Activated CD4-positive, alpha-beta T cell treated with anti-CD3 and anti-CD28 coated beads for 36 hours (primary cell): ENCODE measurements at regions of chr9 and their contacts with region 1.

Region 1: DNA sequence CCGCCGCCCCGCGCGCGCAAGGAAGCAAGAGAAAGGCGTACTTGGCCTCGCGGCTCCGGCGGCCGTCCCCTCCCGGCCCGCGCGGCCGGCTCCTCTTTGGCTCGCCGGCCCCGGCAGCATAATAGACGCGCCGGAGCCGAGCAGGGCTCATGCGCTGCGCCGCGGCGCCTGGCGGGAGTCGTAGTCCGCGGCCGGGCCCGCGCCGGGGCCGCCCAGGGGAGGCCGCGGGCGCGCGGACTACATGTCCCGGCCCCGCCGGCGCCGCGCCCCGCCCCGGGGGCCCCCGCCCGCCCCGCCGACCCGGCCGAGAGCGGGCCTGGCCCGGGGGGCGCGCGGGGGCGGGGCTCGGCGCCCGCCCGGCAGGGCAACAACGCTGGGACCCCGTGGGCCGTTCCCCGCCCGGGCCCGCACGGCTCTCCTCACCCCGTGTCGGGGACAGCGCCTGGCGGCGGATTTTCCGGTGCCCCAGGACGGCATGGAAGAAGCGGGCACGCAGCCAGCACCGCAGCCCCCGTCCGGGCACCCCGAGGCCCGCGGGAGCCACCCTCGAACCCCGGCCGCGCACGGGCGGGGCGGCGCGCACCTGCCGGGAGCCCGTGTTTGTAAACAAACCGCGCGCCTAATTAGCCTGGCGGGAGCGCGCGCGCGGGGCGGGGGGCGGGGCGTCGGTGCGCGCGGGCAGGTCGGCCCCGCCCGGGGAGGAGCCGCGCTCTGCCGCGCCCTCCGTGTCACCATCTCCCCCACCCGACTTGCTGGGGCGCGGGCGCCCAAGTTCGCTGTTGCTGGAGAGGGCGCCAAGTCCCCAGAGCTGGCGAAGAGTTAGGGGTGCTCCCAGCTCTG is at the start of gene BRD3:
- DNase-seq: peak; percentile 91
- ATAC-seq: peak; percentile 85
- H3K4me3 Mint-ChIP-seq: peak within 1 kb of the TSS; percentile 85
- H3K27ac Mint-ChIP-seq: peak within 1 kb of the TSS; percentile 84
- H3K4me1 Mint-ChIP-seq: peaks cover 28% of the 10 kb centered on the region
- H3K27me3 Mint-ChIP-seq: peaks cover 14% of the 10 kb centered on the region
- total RNA-seq, gene BRD3: 33.8 to 39.2 TPM

Region 2: GRCh38 chr9:132474253-132474652 is 1593.9 kb before region 1 on chr9:
- CTCF ChIA-PET with region 1: no interaction called
- POLR2A ChIA-PET with region 1: no interaction called
- intact Hi-C with region 1: no loop called
- DNase-seq: no peak
- ATAC-seq: no peak
- H3K4me3 Mint-ChIP-seq: no peak overlapping the region
- H3K27ac Mint-ChIP-seq: no peak overlapping the region
- H3K4me1 Mint-ChIP-seq: no peaks in the 10 kb centered on the region
- H3K27me3 Mint-ChIP-seq: peaks cover 6% of the 10 kb centered on the region

Region 3: DNA sequence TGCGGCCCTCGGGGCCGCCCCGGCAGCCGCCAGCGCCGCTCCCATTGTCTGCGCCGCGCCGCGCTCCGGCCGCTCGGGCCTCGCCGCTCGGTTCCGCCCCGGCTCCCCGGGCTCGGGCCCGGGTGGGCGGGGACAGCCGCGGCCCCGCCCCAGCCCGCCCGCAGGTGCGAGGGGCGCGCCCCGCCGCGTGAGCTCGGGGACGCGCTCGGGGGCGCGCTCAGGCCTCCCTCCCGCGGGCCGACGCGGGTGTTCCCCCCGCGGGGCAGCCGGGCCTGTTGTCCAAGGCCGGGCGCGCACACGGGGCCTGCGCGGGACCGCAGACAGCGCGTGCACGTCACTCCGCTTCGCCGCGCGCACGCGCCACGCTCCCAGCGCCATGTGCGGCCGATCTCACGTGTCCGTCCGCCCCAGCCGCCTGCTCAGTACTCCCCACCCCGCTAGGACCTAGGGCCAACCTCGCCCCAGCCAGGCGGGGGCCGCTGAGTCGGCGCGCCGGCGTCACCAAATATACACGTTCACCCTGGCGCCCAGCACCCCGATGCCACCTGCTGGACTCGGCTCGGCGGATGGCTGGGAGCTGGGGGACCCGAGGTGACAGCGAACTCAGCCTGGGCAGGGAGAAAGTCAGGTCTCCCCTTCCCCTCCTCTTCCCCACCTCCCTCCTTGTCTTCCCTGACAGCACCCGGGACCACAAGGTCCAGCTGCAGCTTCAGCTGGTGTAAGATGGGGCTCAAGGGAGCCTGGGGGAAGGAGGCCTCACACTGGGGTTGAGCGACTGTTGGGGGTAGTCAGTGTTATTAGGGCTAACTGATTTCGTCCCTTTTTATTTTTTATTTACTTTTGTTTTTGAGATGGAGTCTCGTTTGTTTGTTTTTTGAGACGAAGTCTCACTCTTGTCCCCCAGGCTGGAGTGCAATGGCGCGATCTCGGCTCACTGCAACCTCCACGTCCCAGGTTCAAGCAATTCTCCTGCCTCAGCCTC is 918.7 kb before region 1 on chr9:
- CTCF ChIA-PET with region 1: no interaction called
- POLR2A ChIA-PET with region 1: no interaction called
- intact Hi-C with region 1: loop called (anchors 1 to 5 kb)
- DNase-seq: peak; percentile 92
- ATAC-seq: peak; percentile 68
- H3K4me3 Mint-ChIP-seq: peak overlapping the region; percentile 63
- H3K27ac Mint-ChIP-seq: peak overlapping the region; percentile 67
- H3K4me1 Mint-ChIP-seq: peaks cover 27% of the 10 kb centered on the region
- H3K27me3 Mint-ChIP-seq: no peaks in the 10 kb centered on the region

Region 4: DNA sequence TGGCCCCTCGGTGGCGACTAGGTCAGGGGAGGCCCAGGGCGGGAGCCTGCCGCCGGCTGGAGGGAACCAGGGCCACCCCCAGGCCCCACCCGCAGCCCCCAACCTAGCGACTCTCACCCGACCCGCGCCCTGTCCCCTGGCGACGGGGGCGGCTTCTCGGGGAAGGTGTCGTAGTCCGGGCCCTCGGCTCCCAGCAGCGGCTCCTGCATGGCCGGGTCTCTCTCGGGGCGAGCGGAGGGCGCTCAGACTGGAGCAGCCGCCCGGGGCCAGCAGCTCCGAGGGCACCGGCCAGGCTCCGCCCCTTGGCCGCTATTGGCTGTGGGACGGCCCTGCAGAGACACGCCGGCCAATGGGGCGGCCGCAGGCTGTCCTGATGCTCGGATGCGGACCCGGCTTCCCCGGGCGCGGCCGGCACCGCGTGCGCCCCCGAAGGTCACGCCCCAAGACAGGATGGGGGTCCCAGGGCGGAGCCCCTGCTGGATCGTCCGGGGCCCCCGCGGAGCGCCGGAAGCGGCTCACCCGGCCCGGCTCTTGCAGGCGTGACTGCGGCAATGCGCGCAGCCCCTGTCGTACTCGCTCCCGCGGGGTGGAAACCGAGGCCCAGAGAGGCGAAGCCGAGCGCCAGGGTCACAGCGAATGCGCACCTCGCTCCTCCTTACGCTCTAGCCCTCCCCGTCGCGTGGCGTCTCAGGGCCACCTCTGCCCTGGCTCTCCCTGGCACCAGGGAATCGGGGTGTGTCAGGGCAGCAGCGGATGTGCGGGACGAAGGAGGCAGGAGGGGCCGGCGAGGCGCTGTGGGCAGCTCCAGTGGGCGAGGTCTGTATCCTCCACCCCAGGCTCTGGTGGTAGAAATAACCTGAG is 589.0 kb before region 1 on chr9 and contains the start of gene SLC2A6:
- CTCF ChIA-PET with region 1: no interaction called
- POLR2A ChIA-PET with region 1: no interaction called
- intact Hi-C with region 1: loop called in 1 of 2 experiments (anchors 5 kb)
- DNase-seq: peak; percentile 89
- ATAC-seq: peak; percentile 100
- H3K4me3 Mint-ChIP-seq: peak within 1 kb of the TSS; percentile 67
- H3K27ac Mint-ChIP-seq: no peak within 1 kb of the TSS
- H3K4me1 Mint-ChIP-seq: peaks cover 6% of the 10 kb centered on the region
- H3K27me3 Mint-ChIP-seq: no peaks in the 10 kb centered on the region
- total RNA-seq, gene SLC2A6: 1.6 to 1.9 TPM

Region 5: DNA sequence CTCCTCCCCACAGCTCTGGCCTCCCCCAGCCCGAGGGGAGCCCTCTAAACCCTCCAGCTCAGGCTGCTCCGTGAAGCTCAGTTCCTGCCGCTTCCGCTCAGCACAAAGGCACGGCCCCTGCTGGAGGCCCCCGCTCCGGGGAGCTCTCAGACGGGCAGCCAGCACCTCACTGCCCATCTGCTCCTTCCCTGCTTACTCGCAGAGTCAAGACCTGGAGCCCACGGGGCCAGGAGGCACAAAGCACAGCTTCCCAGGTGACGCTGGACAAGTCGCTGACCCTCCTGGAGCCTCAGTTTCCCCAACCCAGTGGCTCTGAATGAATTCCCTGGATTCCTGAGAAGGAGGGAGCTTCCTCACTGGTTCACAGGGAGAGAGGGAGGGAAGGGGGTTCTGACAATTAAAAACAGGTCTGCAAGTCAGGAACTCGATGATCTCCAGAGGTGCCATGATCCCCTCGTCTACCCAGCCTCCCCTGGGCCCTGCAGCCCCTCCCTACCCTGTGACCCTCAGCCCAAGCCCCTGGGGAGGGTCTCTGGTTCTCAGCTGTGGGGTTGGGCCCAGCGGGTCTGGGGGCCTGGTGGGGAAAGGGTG is 112.2 kb before region 1 on chr9:
- CTCF ChIA-PET with region 1: no interaction called
- POLR2A ChIA-PET with region 1: no interaction called
- intact Hi-C with region 1: no loop called
- DNase-seq: peak; percentile 53
- ATAC-seq: peak; percentile 57
- H3K4me3 Mint-ChIP-seq: no peak overlapping the region
- H3K27ac Mint-ChIP-seq: peak overlapping the region; percentile 37
- H3K4me1 Mint-ChIP-seq: peaks cover 28% of the 10 kb centered on the region
- H3K27me3 Mint-ChIP-seq: no peaks in the 10 kb centered on the region

Region 6: GRCh38 chr9:134083451-134083850 is 15.3 kb after region 1 on chr9:
- CTCF ChIA-PET with region 1: no interaction called
- POLR2A ChIA-PET with region 1: no interaction called
- intact Hi-C with region 1: no loop called
- DNase-seq: no peak
- ATAC-seq: no peak
- H3K4me3 Mint-ChIP-seq: no peak overlapping the region
- H3K27ac Mint-ChIP-seq: no peak overlapping the region
- H3K4me1 Mint-ChIP-seq: no peaks in the 10 kb centered on the region
- H3K27me3 Mint-ChIP-seq: peaks cover 7% of the 10 kb centered on the region

Region 7: GRCh38 chr9:134099123-134099787 is 31.1 kb after region 1 on chr9:
- CTCF ChIA-PET with region 1: no interaction called
- POLR2A ChIA-PET with region 1: no interaction called
- intact Hi-C with region 1: loop called in 1 of 2 experiments (anchors 1 kb)
- DNase-seq: peak; percentile 75
- ATAC-seq: peak; percentile 86
- H3K4me3 Mint-ChIP-seq: no peak overlapping the region
- H3K27ac Mint-ChIP-seq: no peak overlapping the region
- H3K4me1 Mint-ChIP-seq: no peaks in the 10 kb centered on the region
- H3K27me3 Mint-ChIP-seq: peaks cover 17% of the 10 kb centered on the region

Region 8: DNA sequence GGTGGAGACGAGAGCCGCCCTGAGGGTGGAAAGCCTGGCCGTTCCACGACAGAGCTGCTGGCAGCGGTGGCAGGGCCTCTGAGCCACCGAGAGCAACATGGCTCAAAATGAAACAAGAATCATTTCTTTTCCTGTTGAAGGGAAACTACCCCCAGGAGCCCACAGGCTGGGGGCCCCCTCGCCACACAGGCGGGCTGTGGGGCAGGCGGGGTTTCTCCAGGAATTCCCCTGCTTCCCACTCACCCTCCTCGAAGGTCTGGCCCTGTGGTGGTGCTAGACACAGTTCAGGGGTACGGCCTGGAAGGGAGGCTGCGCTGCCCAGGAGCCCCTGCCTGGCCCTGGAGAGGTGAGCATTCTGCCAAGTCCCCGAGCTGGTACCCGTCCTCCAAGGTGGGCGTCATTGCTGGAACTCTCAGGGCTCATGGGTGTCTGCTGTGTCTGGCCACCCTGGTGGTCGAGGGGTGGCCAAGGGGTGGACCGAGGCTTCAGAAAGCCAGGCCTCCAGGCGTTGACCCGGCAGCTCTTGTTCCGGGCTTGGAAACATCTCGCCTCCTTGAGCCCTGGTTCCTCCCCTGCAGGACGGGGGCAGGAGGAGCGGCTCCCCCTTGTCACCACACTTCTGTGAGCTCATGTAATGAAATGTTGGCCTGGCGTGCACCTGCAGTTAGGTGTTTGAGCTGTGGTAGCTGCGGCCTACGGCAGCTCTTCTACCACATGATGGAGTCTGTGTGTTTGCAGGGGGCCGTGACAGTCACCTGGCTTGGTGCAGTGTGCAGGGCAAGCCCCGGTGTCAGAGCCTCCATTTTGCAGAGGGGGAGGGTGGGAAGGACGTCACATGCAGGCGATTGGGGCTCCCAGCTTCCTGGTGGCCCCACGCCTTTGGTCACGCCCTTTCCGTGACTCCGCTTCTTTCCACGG is 323.4 kb after region 1 on chr9:
- CTCF ChIA-PET with region 1: no interaction called
- POLR2A ChIA-PET with region 1: no interaction called
- intact Hi-C with region 1: loop called in 1 of 2 experiments (anchors 2 kb)
- DNase-seq: peak; percentile 89
- ATAC-seq: peak; percentile 69
- H3K4me3 Mint-ChIP-seq: peak overlapping the region; percentile 75
- H3K27ac Mint-ChIP-seq: peak overlapping the region; percentile 95
- H3K4me1 Mint-ChIP-seq: peaks cover 64% of the 10 kb centered on the region
- H3K27me3 Mint-ChIP-seq: peaks cover 11% of the 10 kb centered on the region